Astrocyte of the cerebellum (primary cell): ENCODE measurements at regions of chr5 and their contacts with region 1.

Region 1: GRCh38 chr5:10310066-10310779 is 2.5 kb upstream of the CMBL start:
- DNase-seq: peak; percentile 51
- H3K4me3 ChIP-seq: no peak overlapping the region
- CTCF ChIP-seq: no peak

Region 2: GRCh38 chr5:10243660-10244240 is 66.5 kb before region 1 on chr5:
- in situ Hi-C with region 1: loop called (anchors 5 kb)
- DNase-seq: no peak
- H3K4me3 ChIP-seq: no peak overlapping the region
- CTCF ChIP-seq: no peak

Region 3: GRCh38 chr5:10264604-10265003 is 45.6 kb before region 1 on chr5:
- in situ Hi-C with region 1: no loop called
- DNase-seq: no peak
- H3K4me3 ChIP-seq: no peak overlapping the region
- CTCF ChIP-seq: no peak